Thyroid gland (tissue), 4 donors: ENCODE measurements at regions of chr5 and their contacts with region 1.

Region 1: DNA sequence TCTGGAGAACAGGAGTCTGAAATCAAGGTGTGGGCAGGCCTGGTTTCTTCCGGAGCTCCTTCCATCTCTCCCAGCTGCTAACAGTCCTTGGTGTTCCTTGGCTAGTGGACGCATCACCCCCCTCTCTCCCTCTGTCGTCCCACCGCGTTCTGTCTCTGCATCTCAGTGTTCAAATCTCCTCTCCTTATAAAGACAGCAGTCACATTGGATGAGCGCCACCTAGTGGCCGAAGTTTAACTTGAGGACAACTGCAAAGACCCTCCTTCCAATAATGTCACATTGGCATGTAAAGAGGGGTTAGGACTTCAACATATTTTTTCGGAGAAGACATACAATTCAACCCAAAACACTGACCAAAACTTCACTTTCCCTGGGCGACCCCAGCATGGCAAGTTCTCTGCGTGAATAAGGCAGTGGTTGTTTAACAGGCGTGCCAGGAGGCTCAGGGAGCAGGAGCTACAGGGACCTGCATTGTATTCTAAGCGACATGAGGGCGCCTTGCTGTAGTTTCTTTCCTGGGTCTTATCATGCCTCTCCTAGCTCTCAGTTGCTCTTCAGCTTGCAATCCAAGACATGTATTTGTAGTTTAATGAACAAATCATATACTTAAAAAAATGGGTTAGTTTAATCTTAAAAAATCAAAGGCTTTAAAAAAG is 27.9 kb upstream of the BASP1 start:
- DNase-seq: peak; percentile 75 to 83
- H3K4me3 ChIP-seq: no peak overlapping the region
- H3K27ac ChIP-seq: peak overlapping the region in 2 of 3 donors; percentile 51 to 60
- H3K4me1 ChIP-seq: peaks cover 19 to 41% of the 10 kb centered on the region in 2 donors
- H3K27me3 ChIP-seq: no peaks in the 10 kb centered on the region
- CTCF ChIP-seq: peak; percentile 64 to 90 (median 78)
- POLR2A ChIP-seq: no peak

Region 2: DNA sequence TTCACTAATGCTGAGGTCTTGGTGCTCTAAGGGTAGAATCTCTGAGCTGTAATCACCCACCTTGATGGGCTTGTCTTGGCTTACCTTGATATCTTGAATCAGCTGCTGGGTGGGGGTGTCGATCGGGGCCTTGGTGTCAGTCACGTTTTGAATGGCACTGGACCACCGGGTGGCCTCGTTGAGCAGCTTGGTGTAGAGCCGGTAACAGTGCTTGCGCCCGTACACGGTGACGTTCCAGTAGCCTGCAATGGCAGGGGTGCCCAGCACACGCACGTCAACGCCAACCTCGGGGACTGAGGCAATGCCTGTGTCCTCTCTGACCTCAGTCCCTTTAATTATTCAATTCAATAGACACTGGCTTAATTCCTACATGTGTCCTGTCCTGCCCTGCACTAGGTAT is 509.6 kb before region 1 on chr5:
- intact Hi-C with region 1: loop called (anchors 10 kb)
- DNase-seq: no peak
- H3K4me3 ChIP-seq: no peak overlapping the region
- H3K27ac ChIP-seq: no peak overlapping the region
- H3K4me1 ChIP-seq: no peaks in the 10 kb centered on the region
- H3K27me3 ChIP-seq: no peaks in the 10 kb centered on the region
- CTCF ChIP-seq: no peak
- POLR2A ChIP-seq: no peak

Region 3: GRCh38 chr5:16791036-16791705 is 398.3 kb before region 1 on chr5:
- intact Hi-C with region 1: loop called (anchors 5 kb)
- DNase-seq: peak in 1 of 2 donors; percentile 29
- H3K4me3 ChIP-seq: no peak overlapping the region
- H3K27ac ChIP-seq: no peak overlapping the region
- H3K4me1 ChIP-seq: peaks cover 0 to 7% of the 10 kb centered on the region in 2 donors
- H3K27me3 ChIP-seq: no peaks in the 10 kb centered on the region
- CTCF ChIP-seq: peak; percentile 60 to 82 (median 66)
- POLR2A ChIP-seq: no peak

Region 4: DNA sequence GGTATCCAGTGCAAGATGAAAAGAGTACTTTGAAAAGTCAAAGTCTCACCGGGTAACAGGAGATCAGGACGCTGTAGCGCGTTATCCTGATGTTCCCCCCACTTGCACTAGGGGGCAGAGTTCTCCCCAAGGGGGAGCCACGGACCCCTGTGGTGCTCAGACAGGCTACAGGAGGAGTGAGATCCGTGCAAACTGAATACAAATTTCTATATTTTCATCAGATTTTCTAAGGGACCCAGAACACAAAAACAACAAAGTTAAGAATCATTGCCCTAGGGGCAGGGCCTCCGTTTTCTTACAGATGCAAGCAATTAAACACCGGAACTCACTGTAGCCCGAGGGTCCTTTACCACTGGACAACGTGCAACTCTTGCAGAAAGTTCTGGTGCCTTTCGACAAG is 255.4 kb before region 1 on chr5:
- intact Hi-C with region 1: loop called (anchors 10 kb)
- DNase-seq: peak; percentile 74 to 81
- H3K4me3 ChIP-seq: peak overlapping the region in 2 of 3 donors; percentile 42 to 83
- H3K27ac ChIP-seq: peak overlapping the region in 2 of 3 donors; percentile 88 to 94
- H3K4me1 ChIP-seq: peaks cover 33 to 36% of the 10 kb centered on the region in 2 donors
- H3K27me3 ChIP-seq: no peaks in the 10 kb centered on the region
- CTCF ChIP-seq: peak; percentile 68 to 86 (median 82)
- POLR2A ChIP-seq: no peak

Region 5: DNA sequence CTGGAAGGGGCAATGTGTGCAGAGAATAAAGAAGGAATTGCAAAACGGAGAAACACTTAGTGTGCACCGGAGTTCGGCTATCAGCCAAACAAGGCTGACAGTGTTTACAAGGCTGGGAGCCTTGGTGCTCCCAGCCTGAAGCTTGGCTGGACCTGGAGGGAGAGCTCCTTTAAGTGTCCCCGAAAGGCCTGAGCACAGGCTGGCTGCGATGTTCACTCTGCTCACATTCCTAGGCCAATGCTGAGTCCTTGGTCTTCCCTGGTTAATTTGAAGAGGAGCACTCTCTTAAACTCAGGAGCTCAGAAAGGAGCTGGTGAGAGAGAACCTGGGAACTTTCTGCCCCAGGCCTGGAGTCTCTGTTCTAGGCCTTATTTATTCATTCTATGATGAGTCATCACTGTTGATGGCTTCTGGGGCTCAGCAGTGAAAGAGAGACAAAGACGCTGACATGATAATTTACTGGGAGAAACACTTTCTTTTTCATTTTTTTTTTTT is 164.8 kb before region 1 on chr5:
- intact Hi-C with region 1: no loop called
- DNase-seq: peak; percentile 76 to 93
- H3K4me3 ChIP-seq: no peak overlapping the region
- H3K27ac ChIP-seq: peak overlapping the region; percentile 26 to 58 (median 26)
- H3K4me1 ChIP-seq: peaks cover 17 to 22% of the 10 kb centered on the region in 2 donors
- H3K27me3 ChIP-seq: no peaks in the 10 kb centered on the region
- CTCF ChIP-seq: no peak
- POLR2A ChIP-seq: no peak